ENCODE measurements at regions of chr5 and their contacts with region 1.

Region 1: DNA sequence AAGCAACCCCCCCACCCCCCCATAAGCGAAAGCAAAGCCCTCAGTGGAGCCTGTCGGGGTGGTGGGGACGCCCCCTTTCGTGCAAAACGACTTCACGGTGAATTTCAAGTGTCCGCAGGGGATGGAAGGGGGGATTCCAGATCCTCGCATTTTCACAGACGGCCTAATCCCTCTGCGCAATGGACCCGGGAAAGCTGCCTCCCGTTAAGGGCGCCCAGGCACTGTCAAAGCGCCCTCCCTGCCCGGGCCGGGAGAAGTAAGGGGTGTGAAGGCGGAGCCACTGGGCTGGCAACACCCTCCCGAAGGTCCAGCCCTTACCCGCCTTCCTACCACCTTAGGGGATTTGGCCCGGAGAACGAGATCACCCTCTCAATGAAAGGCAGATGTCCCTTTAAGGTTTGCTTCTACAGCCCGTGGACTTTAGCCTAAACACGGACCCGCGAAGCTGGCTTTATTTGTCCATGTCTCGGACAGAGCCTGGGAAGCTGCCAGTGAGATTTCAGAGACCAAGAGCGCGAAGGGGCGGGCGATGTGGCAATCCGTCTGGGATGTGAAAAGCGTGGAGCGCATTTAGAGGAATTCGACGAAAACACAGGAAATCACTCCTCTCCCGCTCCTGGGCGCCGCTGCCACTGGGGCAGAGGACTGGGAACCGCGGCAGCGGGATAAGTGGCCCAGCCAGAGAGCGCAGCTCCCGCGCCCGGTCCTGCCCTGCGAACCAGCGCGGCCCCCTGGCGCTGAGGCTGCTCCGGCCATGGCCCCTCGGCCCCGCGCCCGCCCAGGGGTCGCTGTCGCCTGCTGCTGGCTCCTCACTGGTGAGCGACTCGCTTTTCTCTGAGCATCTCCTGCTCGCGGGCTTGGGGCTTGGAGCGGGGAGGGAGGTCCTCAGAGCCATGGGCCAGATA is at the starts of genes ITGA1 and PELO:
- DNase-seq: peak; percentile 84
- ATAC-seq: peak; percentile 95
- total RNA-seq, gene ITGA1: 23.6 TPM
- total RNA-seq, gene PELO: 16.9 TPM

Region 2: DNA sequence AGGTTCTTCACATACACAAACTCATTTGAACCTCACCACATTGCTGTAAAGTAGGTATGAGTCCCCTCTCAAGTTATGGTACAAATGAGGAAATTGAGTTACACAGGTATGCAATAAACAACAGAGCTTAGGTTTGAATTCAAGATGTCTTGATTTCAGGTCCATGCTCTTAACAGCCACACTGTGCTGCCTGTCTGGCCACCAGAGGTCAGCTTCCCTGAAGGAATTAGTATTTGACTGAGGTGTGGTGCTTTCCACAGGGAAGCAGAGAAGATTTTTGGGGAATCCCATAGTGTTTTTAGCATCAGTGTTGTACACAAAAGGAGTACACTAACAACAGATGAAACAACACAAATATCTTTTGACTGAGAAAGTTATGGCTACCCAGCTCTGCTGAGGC is 94.6 kb before region 1 on chr5:
- intact Hi-C with region 1: loop called (anchors 10 kb)
- DNase-seq: peak; percentile 48
- ATAC-seq: peak; percentile 62

Region 3: DNA sequence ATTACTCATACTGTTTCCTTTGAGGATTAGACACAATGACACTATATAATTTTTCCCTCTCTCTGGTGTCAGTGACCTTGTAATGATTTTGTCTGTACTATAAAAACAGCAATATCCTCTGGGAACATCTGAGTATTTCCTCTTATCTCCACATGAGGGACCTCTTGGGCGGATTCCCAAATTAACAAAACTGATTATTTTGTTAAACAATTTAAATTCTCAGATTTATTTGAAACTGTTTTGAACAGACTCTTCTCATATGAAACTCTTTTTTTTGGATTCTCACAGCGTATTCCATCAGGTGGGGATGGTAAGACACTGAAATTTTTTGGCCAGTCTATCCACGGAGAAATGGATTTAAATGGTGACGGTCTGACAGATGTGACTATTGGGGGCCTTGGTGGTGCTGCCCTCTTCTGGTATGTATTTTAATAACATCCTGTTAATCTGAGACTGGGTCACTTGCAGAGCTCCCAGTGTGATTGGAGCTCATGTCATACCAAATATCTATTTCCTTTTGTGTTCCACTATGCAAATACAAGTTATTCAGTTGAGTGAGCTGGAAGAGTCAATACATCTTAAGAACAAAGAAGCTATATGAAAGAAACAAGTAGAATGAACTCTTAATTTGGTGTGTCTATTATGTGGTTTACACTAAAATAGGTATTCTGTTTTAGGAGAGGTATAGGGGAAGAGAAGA is 127.5 kb after region 1 on chr5:
- intact Hi-C with region 1: loop called (anchors 5 kb)
- DNase-seq: peak; percentile 39
- ATAC-seq: peak; percentile 98